A549 (cell line): ENCODE measurements at regions of chr19 and their contacts with region 1.

Region 1: DNA sequence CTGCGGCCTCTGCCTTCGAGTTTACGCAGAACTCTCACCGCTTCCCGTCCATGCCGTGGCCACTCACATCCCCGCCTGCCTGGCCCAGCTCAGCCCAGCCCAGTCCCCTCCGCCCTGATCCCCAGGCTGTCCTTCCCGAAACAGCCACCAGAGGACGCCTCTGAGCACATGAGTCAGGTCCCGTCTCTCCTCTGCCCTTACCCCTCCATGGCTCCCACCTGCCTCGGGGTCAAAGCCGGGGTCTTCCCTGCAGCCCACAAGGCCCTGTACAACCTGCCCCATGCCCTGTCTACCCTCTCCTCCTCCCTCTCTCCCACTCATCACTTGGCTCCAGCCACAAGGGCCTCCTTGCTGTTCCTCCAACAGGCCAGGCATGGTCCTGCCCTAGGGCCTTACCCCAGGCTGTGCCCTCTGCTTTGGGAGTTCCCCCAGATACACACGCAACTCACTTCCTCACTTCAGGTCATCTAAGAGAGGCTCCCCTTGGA is 8.1 kb upstream of the SEMA6B start:
- DNase-seq: peak in 1 of 2 experiments; percentile 80
- ATAC-seq: peak; percentile 85 to 91
- H3K4me3 ChIP-seq: no peak overlapping the region
- H3K27ac ChIP-seq: peak overlapping the region in 1 of 2 experiments; percentile 58; a peak in 2 of 6 replicates
- H3K4me1 ChIP-seq: peaks cover 8% of the 10 kb centered on the region; the same call in 2 of the 3 replicates
- CTCF ChIP-seq: peak; percentile 58
- EP300 ChIP-seq: no peak
- POLR2A ChIP-seq: no peak
- RAD21 ChIP-seq: peak; percentile 27 to 48; a peak in 4 of 5 replicates

Region 2: DNA sequence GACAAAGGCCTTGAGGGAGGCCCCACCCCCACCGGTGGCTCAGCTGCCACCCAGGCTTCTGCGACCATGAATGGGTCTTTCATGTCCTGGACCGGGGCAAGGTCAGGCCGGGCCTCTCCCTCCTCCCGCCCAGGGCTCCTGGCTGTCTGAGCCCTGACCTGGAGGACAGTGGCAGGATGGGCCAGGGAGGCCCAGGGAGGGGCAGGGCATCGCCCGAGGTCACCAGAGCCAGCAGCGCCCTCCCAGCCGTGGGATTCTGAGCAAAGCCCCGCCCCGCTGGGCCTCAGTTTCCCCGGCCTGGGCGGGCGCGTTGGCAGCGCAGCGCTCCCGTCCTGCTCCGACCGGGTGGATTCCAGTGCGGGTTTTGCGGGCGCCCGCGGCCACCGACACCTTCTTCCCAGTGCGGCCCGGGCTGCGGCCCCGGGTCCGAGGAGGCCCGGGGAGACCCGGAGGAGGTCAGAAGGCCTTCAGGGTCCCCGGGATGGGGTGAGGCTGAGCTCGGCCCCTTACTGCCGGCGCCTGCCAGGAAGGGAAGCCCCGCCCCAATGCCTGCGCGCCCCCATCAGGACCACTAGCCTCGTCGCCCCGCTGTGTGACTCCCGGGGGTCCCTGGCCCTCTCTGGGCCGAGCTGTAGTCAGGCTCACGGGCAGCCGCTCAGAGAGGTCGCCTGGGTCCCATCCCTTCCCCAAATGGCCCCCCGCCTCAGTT is 16.5 kb after region 1 on chr19:
- CTCF ChIA-PET with region 1: interaction called, 28 read pairs
- POLR2A ChIA-PET with region 1: no interaction called
- DNase-seq: no peak
- ATAC-seq: peak; percentile 52 to 71; a peak in 5 of 6 replicates
- H3K4me3 ChIP-seq: peak overlapping the region; percentile 64
- H3K27ac ChIP-seq: peak overlapping the region; percentile 77 to 95
- H3K4me1 ChIP-seq: peaks cover 27% of the 10 kb centered on the region
- CTCF ChIP-seq: no peak
- EP300 ChIP-seq: no peak
- POLR2A ChIP-seq: no peak
- RAD21 ChIP-seq: no peak

Region 3: GRCh38 chr19:4589579-4590410 is 22.2 kb after region 1 on chr19:
- CTCF ChIA-PET with region 1: interaction called, 10 read pairs
- POLR2A ChIA-PET with region 1: no interaction called
- DNase-seq: no peak
- ATAC-seq: peak; percentile 79 to 80; a peak in 5 of 6 replicates
- H3K4me3 ChIP-seq: no peak overlapping the region
- H3K27ac ChIP-seq: no peak overlapping the region
- H3K4me1 ChIP-seq: peaks cover 2% of the 10 kb centered on the region
- CTCF ChIP-seq: peak; percentile 38; the same call in 2 of the 3 replicates
- EP300 ChIP-seq: no peak
- POLR2A ChIP-seq: no peak
- RAD21 ChIP-seq: peak; percentile 12 to 21; a peak in 1 of 5 replicates

Region 4: GRCh38 chr19:4624733-4625362 is 57.2 kb after region 1 on chr19:
- CTCF ChIA-PET with region 1: interaction called, 15 read pairs
- POLR2A ChIA-PET with region 1: no interaction called
- DNase-seq: peak; percentile 36 to 79
- ATAC-seq: peak; percentile 75 to 78; a peak in 4 of 6 replicates
- H3K4me3 ChIP-seq: no peak overlapping the region
- H3K27ac ChIP-seq: peak overlapping the region; percentile 40 to 71; a peak in 4 of 6 replicates
- H3K4me1 ChIP-seq: peaks cover 22% of the 10 kb centered on the region; the same call in 2 of the 3 replicates
- CTCF ChIP-seq: peak; percentile 33
- EP300 ChIP-seq: no peak
- POLR2A ChIP-seq: no peak
- RAD21 ChIP-seq: peak in 1 of 2 experiments; percentile 16; a peak in 1 of 5 replicates